Heart right ventricle (tissue), 16 donors: ENCODE measurements at regions of chrX and their contacts with region 1.

Region 1: GRCh38 chrX:12974796-12975669 is at the start of gene TMSB4X:
- DNase-seq: peak; percentile 83
- ATAC-seq: peak; percentile 77 to 95 (median 86)
- H3K4me3 ChIP-seq: peak within 1 kb of the TSS; percentile 50 to 98 (median 86)
- H3K27ac ChIP-seq: peak within 1 kb of the TSS; percentile 88 to 99 (median 96)
- H3K4me1 ChIP-seq: peaks cover 0 to 64% (median 6%) of the 10 kb centered on the region in 9 donors
- H3K27me3 ChIP-seq: peaks cover 0 to 69% (median 0%) of the 10 kb centered on the region in 7 donors
- CTCF ChIP-seq: peak in 1 of 9 donors; percentile 2
- total RNA-seq, gene TMSB4X: 700 to 2,442 (median 850) TPM

Region 2: GRCh38 chrX:13029341-13029740 is 54.3 kb after region 1 on chrX:
- intact Hi-C with region 1: loop called in 2 of 10 experiments (anchors 5 kb)
- DNase-seq: peak; percentile 33 to 71
- ATAC-seq: peak; percentile 55 to 90 (median 81)
- H3K4me3 ChIP-seq: peak overlapping the region in 2 of 10 donors; percentile 11 to 26
- H3K27ac ChIP-seq: peak overlapping the region; percentile 39 to 80 (median 70)
- H3K4me1 ChIP-seq: peaks cover 0 to 32% (median 21%) of the 10 kb centered on the region in 9 donors
- H3K27me3 ChIP-seq: peaks cover 0 to 69% (median 0%) of the 10 kb centered on the region in 7 donors
- CTCF ChIP-seq: no peak

Region 3: GRCh38 chrX:13101441-13102139 is 126.6 kb after region 1 on chrX:
- intact Hi-C with region 1: loop called in 5 of 10 experiments (anchors 5 to 10 kb)
- DNase-seq: peak; percentile 42 to 81
- ATAC-seq: peak; percentile 93 to 99 (median 98)
- H3K4me3 ChIP-seq: no peak overlapping the region
- H3K27ac ChIP-seq: peak overlapping the region; percentile 32 to 80 (median 66)
- H3K4me1 ChIP-seq: peaks cover 0 to 47% (median 27%) of the 10 kb centered on the region in 9 donors
- H3K27me3 ChIP-seq: peaks cover 0 to 44% (median 0%) of the 10 kb centered on the region in 7 donors
- CTCF ChIP-seq: no peak

Region 4: GRCh38 chrX:13167481-13168231 is 192.6 kb after region 1 on chrX:
- intact Hi-C with region 1: loop called in 4 of 10 experiments (anchors 5 to 10 kb)
- DNase-seq: peak in 1 of 2 donors; percentile 45
- ATAC-seq: peak; percentile 74 to 96 (median 88)
- H3K4me3 ChIP-seq: no peak overlapping the region
- H3K27ac ChIP-seq: peak overlapping the region; percentile 50 to 88 (median 74)
- H3K4me1 ChIP-seq: peaks cover 2 to 46% (median 16%) of the 10 kb centered on the region in 9 donors
- H3K27me3 ChIP-seq: peaks cover 0 to 17% (median 0%) of the 10 kb centered on the region in 7 donors
- CTCF ChIP-seq: no peak

Region 5: GRCh38 chrX:13223868-13224555 is 249.0 kb after region 1 on chrX:
- intact Hi-C with region 1: loop called in 5 of 10 experiments (anchors 10 kb)
- DNase-seq: peak in 1 of 2 donors; percentile 25
- ATAC-seq: peak; percentile 81 to 97 (median 92)
- H3K4me3 ChIP-seq: no peak overlapping the region
- H3K27ac ChIP-seq: peak overlapping the region in 7 of 10 donors; percentile 32 to 73 (median 51)
- H3K4me1 ChIP-seq: peaks cover 0 to 21% (median 7%) of the 10 kb centered on the region in 9 donors
- H3K27me3 ChIP-seq: peaks cover 0 to 29% (median 0%) of the 10 kb centered on the region in 7 donors
- CTCF ChIP-seq: peak in 2 of 9 donors; percentile 13 to 23

Region 6: GRCh38 chrX:13341491-13342101 is 366.6 kb after region 1 on chrX:
- intact Hi-C with region 1: loop called in 1 of 10 experiments (anchors 10 kb)
- DNase-seq: no peak
- ATAC-seq: peak in 2 of 8 donors; percentile 48 to 71
- H3K4me3 ChIP-seq: no peak overlapping the region
- H3K27ac ChIP-seq: peak overlapping the region in 3 of 10 donors; percentile 12 to 29 (median 22)
- H3K4me1 ChIP-seq: no peaks in the 10 kb centered on the region
- H3K27me3 ChIP-seq: peaks cover 0 to 30% (median 0%) of the 10 kb centered on the region in 7 donors
- CTCF ChIP-seq: peak in 4 of 9 donors; percentile 16 to 29 (median 24)

Region 7: DNA sequence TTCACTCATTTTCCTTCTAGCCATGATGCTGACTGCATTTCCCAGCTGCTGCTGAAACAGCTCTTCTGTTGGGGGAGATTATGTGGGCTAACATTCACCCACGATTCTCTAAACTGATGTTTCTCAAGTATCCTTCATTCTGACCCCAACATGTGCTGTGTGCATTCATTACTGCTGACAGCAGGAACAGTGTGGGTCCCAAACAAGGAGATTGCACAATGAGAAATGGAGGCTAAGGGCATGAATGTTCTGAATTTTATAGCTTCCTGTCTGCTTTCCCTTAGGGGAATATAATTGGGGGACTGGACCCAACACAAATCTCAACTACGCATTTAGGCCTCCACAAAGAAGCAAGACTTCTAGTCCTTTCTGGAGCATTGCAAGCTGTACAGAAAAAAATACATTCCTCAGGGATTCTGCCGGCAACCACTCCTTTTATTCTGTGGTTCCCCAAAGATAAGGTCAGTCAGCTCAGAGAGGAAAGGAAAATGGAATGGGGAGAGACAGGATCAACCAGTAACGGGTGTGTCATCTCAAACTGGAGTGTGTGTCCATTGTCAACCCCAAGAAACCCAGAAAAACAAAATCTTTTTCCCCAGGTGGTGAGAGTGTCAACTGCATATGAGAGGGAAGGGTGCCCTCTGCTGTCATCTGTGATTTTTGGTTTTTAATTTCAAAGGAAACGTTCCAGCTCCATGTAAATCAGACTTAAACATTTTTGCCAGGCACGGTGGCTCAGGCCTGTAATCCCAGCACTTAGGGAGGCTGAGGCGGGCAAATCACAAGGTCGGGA is 512.9 kb after region 1 on chrX:
- intact Hi-C with region 1: loop called (anchors 1 to 10 kb)
- DNase-seq: peak in 1 of 2 donors; percentile 43
- ATAC-seq: peak; percentile 71 to 90 (median 78)
- H3K4me3 ChIP-seq: no peak overlapping the region
- H3K27ac ChIP-seq: peak overlapping the region; percentile 40 to 82 (median 70)
- H3K4me1 ChIP-seq: peaks cover 0 to 29% (median 6%) of the 10 kb centered on the region in 9 donors
- H3K27me3 ChIP-seq: peaks cover 0 to 55% (median 0%) of the 10 kb centered on the region in 7 donors
- CTCF ChIP-seq: peak; percentile 26 to 68 (median 62)